CD8-positive, alpha-beta T cell (primary cell): ENCODE measurements at regions of chr11 and their contacts with region 1.

Region 1: GRCh38 chr11:32176223-32176934 is 85.5 kb downstream of the RCN1 start:
- DNase-seq: peak; percentile 63 to 85 (median 75)
- ATAC-seq: peak; percentile 58
- H3K4me3 ChIP-seq: no peak overlapping the region
- H3K4me3 Mint-ChIP-seq: no peak overlapping the region
- H3K27ac ChIP-seq: no peak overlapping the region
- H3K27ac Mint-ChIP-seq: no peak overlapping the region
- H3K4me1 ChIP-seq: no peaks in the 10 kb centered on the region
- H3K4me1 Mint-ChIP-seq: peaks cover 4% of the 10 kb centered on the region
- H3K27me3 ChIP-seq: no peaks in the 10 kb centered on the region
- H3K27me3 Mint-ChIP-seq: peaks cover 10% of the 10 kb centered on the region
- CTCF ChIP-seq: peak; percentile 95

Region 2: DNA sequence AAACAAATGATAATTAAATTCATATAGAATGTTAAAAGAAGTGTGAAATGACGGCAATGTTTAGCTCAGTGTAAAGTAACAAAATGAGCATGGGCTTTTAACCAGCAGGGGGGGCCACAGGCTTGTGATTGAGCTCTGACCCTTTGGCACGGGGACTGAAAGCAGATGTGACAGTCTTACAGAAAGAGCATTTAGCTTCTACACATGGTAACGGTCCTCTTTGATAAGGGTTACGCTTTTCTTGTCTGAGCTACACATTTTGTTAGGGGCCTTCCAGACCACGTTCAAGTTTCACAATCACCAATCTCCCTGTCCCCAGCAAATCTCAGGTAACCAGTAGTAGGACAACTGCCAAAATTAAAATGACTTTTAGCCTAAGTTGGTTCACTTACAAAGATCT is 1069.3 kb before region 1 on chr11:
- CTCF ChIA-PET with region 1: interaction called, 4 read pairs
- POLR2A ChIA-PET with region 1: no interaction called
- intact Hi-C with region 1: loop called in 1 of 2 experiments (anchors 1 kb)
- DNase-seq: peak in 7 of 9 experiments; percentile 7 to 48 (median 36)
- ATAC-seq: no peak
- H3K4me3 ChIP-seq: no peak overlapping the region
- H3K4me3 Mint-ChIP-seq: no peak overlapping the region
- H3K27ac ChIP-seq: no peak overlapping the region
- H3K27ac Mint-ChIP-seq: no peak overlapping the region
- H3K4me1 ChIP-seq: no peaks in the 10 kb centered on the region
- H3K4me1 Mint-ChIP-seq: no peaks in the 10 kb centered on the region
- H3K27me3 ChIP-seq: no peaks in the 10 kb centered on the region
- H3K27me3 Mint-ChIP-seq: no peaks in the 10 kb centered on the region
- CTCF ChIP-seq: peak; percentile 22

Region 3: GRCh38 chr11:31337806-31338205 is 838.6 kb before region 1 on chr11:
- CTCF ChIA-PET with region 1: no interaction called
- POLR2A ChIA-PET with region 1: no interaction called
- intact Hi-C with region 1: loop called in 1 of 2 experiments (anchors 10 kb)
- DNase-seq: no peak
- ATAC-seq: no peak
- H3K4me3 ChIP-seq: no peak overlapping the region
- H3K4me3 Mint-ChIP-seq: no peak overlapping the region
- H3K27ac ChIP-seq: no peak overlapping the region
- H3K27ac Mint-ChIP-seq: no peak overlapping the region
- H3K4me1 ChIP-seq: no peaks in the 10 kb centered on the region
- H3K4me1 Mint-ChIP-seq: no peaks in the 10 kb centered on the region
- H3K27me3 ChIP-seq: no peaks in the 10 kb centered on the region
- H3K27me3 Mint-ChIP-seq: peaks cover 19% of the 10 kb centered on the region
- CTCF ChIP-seq: no peak

Region 4: DNA sequence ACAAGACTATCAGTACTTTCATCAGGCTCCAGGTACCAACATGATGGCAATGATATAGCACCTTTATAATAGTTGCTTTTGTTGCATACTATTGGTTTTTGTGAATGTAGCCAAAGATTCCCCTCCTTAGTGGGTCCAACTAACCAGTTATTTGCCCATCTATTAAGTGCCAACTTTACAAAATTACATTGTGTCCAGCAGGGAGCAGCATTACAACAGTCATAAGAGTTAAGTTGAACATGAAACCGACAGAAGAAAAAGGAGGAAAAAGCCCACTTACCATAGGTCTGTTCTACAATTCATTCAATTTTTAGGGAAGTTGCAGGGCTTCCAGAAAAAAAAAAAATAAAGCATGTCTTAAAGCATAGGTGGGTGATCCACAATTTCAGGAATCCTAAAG is 688.5 kb before region 1 on chr11:
- CTCF ChIA-PET with region 1: no interaction called
- POLR2A ChIA-PET with region 1: no interaction called
- intact Hi-C with region 1: loop called (anchors 5 kb)
- DNase-seq: peak in 2 of 9 experiments; percentile 35 to 51
- ATAC-seq: no peak
- H3K4me3 ChIP-seq: no peak overlapping the region
- H3K4me3 Mint-ChIP-seq: no peak overlapping the region
- H3K27ac ChIP-seq: no peak overlapping the region
- H3K27ac Mint-ChIP-seq: no peak overlapping the region
- H3K4me1 ChIP-seq: no peaks in the 10 kb centered on the region
- H3K4me1 Mint-ChIP-seq: peaks cover 27% of the 10 kb centered on the region
- H3K27me3 ChIP-seq: no peaks in the 10 kb centered on the region
- H3K27me3 Mint-ChIP-seq: no peaks in the 10 kb centered on the region
- CTCF ChIP-seq: peak; percentile 43

Region 5: DNA sequence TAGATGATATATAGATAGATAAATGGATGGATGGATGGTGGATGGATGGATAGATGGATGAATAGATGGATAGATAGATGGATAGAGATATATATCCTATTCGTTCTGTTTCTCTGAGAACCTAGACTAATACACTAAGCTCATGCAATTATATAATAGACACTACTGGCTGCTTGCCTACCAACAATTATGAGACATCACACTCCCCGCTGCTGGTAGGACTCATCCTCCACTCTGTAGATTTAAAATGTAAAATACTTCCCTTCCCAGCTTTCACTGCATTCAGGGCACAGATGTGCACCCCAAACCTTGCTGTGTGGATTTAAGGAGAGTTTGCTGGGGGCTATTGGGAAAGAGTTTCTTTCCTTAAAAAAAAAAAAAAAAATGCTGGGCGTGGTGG is 113.8 kb before region 1 on chr11:
- CTCF ChIA-PET with region 1: interaction called, 19 read pairs
- POLR2A ChIA-PET with region 1: no interaction called
- intact Hi-C with region 1: no loop called
- DNase-seq: no peak
- ATAC-seq: no peak
- H3K4me3 ChIP-seq: no peak overlapping the region
- H3K4me3 Mint-ChIP-seq: no peak overlapping the region
- H3K27ac ChIP-seq: no peak overlapping the region
- H3K27ac Mint-ChIP-seq: no peak overlapping the region
- H3K4me1 ChIP-seq: no peaks in the 10 kb centered on the region
- H3K4me1 Mint-ChIP-seq: no peaks in the 10 kb centered on the region
- H3K27me3 ChIP-seq: no peaks in the 10 kb centered on the region
- H3K27me3 Mint-ChIP-seq: peaks cover 22% of the 10 kb centered on the region
- CTCF ChIP-seq: no peak

Region 6: GRCh38 chr11:32161293-32161692 is 15.1 kb before region 1 on chr11:
- CTCF ChIA-PET with region 1: interaction called, 33 read pairs
- POLR2A ChIA-PET with region 1: no interaction called
- intact Hi-C with region 1: no loop called
- DNase-seq: no peak
- ATAC-seq: no peak
- H3K4me3 ChIP-seq: no peak overlapping the region
- H3K4me3 Mint-ChIP-seq: no peak overlapping the region
- H3K27ac ChIP-seq: no peak overlapping the region
- H3K27ac Mint-ChIP-seq: no peak overlapping the region
- H3K4me1 ChIP-seq: peaks cover 5% of the 10 kb centered on the region
- H3K4me1 Mint-ChIP-seq: peaks cover 2% of the 10 kb centered on the region
- H3K27me3 ChIP-seq: no peaks in the 10 kb centered on the region
- H3K27me3 Mint-ChIP-seq: peaks cover 11% of the 10 kb centered on the region
- CTCF ChIP-seq: no peak

Region 7: GRCh38 chr11:32333320-32333991 is 157.1 kb after region 1 on chr11:
- CTCF ChIA-PET with region 1: no interaction called
- POLR2A ChIA-PET with region 1: no interaction called
- intact Hi-C with region 1: no loop called
- DNase-seq: peak in 5 of 9 experiments; percentile 12 to 26 (median 19)
- ATAC-seq: no peak
- H3K4me3 ChIP-seq: peak overlapping the region; percentile 43 to 48
- H3K4me3 Mint-ChIP-seq: peak overlapping the region; percentile 75
- H3K27ac ChIP-seq: no peak overlapping the region
- H3K27ac Mint-ChIP-seq: no peak overlapping the region
- H3K4me1 ChIP-seq: no peaks in the 10 kb centered on the region
- H3K4me1 Mint-ChIP-seq: peaks cover 11% of the 10 kb centered on the region
- H3K27me3 ChIP-seq: peaks cover 6 to 8% of the 10 kb centered on the region in 2 experiments
- H3K27me3 Mint-ChIP-seq: peaks cover 52% of the 10 kb centered on the region
- CTCF ChIP-seq: no peak

Region 8: GRCh38 chr11:32343325-32344008 is 167.1 kb after region 1 on chr11:
- CTCF ChIA-PET with region 1: no interaction called
- POLR2A ChIA-PET with region 1: no interaction called
- intact Hi-C with region 1: no loop called
- DNase-seq: peak in 1 of 9 experiments; percentile 26
- ATAC-seq: no peak
- H3K4me3 ChIP-seq: no peak overlapping the region
- H3K4me3 Mint-ChIP-seq: no peak overlapping the region
- H3K27ac ChIP-seq: no peak overlapping the region
- H3K27ac Mint-ChIP-seq: no peak overlapping the region
- H3K4me1 ChIP-seq: peaks cover 8% of the 10 kb centered on the region
- H3K4me1 Mint-ChIP-seq: peaks cover 9% of the 10 kb centered on the region
- H3K27me3 ChIP-seq: no peaks in the 10 kb centered on the region
- H3K27me3 Mint-ChIP-seq: peaks cover 3% of the 10 kb centered on the region
- CTCF ChIP-seq: no peak

Region 9: GRCh38 chr11:32630844-32631243 is 454.5 kb after region 1 on chr11:
- CTCF ChIA-PET with region 1: no interaction called
- POLR2A ChIA-PET with region 1: no interaction called
- intact Hi-C with region 1: no loop called
- DNase-seq: no peak
- ATAC-seq: no peak
- H3K4me3 ChIP-seq: no peak overlapping the region
- H3K4me3 Mint-ChIP-seq: no peak overlapping the region
- H3K27ac ChIP-seq: no peak overlapping the region
- H3K27ac Mint-ChIP-seq: no peak overlapping the region
- H3K4me1 ChIP-seq: no peaks in the 10 kb centered on the region
- H3K4me1 Mint-ChIP-seq: no peaks in the 10 kb centered on the region
- H3K27me3 ChIP-seq: no peaks in the 10 kb centered on the region
- H3K27me3 Mint-ChIP-seq: peaks cover 5% of the 10 kb centered on the region
- CTCF ChIP-seq: no peak